Heart right ventricle (tissue), 16 donors: ENCODE measurements at regions of chr5 and their contacts with region 1.

Region 1: DNA sequence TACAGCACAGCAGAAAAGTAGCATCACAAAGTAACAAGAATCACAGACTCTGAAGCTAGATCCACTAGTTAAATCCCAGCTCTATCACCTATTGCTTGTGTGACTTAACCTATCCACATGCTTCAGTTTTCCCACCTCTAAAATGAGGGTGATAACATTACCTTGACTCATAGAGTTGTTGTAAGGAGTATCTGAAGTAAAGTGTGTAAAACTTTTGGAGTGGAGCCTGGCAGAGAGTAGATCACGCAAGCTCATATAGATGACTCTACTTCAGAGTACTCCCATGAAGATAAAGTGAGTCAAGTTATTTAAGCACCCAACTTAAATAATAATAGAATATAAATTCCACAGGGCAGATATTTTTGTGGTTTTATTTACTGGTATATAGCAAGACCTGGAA is 94.5 kb upstream of the FER start:
- DNase-seq: no peak
- ATAC-seq: no peak
- H3K4me3 ChIP-seq: no peak overlapping the region
- H3K27ac ChIP-seq: no peak overlapping the region
- H3K4me1 ChIP-seq: peaks cover 0 to 10% (median 0%) of the 10 kb centered on the region in 9 donors
- H3K27me3 ChIP-seq: no peaks in the 10 kb centered on the region
- CTCF ChIP-seq: no peak

Region 2: GRCh38 chr5:108238936-108239887 is 414.0 kb before region 1 on chr5:
- intact Hi-C with region 1: no loop called
- DNase-seq: no peak
- ATAC-seq: peak in 3 of 8 donors; percentile 22 to 62 (median 55)
- H3K4me3 ChIP-seq: no peak overlapping the region
- H3K27ac ChIP-seq: no peak overlapping the region
- H3K4me1 ChIP-seq: peaks cover 0 to under 1% (median 0%) of the 10 kb centered on the region in 9 donors
- H3K27me3 ChIP-seq: no peaks in the 10 kb centered on the region
- CTCF ChIP-seq: no peak

Region 3: GRCh38 chr5:108617467-108618435 is 35.5 kb before region 1 on chr5:
- intact Hi-C with region 1: loop called in 1 of 10 experiments (anchors 1 kb)
- DNase-seq: no peak
- ATAC-seq: no peak
- H3K4me3 ChIP-seq: no peak overlapping the region
- H3K27ac ChIP-seq: no peak overlapping the region
- H3K4me1 ChIP-seq: no peaks in the 10 kb centered on the region
- H3K27me3 ChIP-seq: peaks cover 0 to 3% (median 0%) of the 10 kb centered on the region in 7 donors
- CTCF ChIP-seq: no peak